Right ventricle myocardium inferior (tissue), 1 donor: ENCODE measurements at regions of chr1 and their contacts with region 1.

Region 1: GRCh38 chr1:184533049-184533448 is 146.2 kb downstream of the C1orf21 start:
- DNase-seq: no peak
- ATAC-seq: no peak

Region 2: DNA sequence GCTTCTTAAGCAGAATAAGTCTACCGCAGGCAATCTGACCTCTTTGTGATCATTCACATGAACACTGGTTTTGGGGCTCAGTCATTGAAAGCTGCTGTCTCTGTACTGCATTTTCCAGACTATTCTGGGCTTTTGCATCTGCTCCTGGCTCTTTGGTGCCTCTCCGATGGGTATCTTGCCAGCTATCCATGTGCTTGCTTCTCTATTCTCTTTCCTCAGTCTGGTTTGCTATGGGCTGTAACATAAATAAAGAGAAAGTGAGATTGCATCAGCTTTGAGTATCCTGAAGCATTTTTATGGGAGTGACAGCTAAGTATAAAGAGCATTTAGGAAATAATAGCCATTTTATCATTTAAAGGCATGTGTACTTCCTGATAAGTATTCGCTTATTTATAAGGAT is 75.5 kb before region 1 on chr1:
- intact Hi-C with region 1: no loop called
- DNase-seq: no peak
- ATAC-seq: no peak

Region 3: GRCh38 chr1:184622136-184622823 is 89.2 kb after region 1 on chr1:
- intact Hi-C with region 1: loop called (anchors 5 kb)
- DNase-seq: no peak
- ATAC-seq: peak; percentile 89